Endothelial cell of umbilical vein (primary cell): ENCODE measurements at regions of chr6 and their contacts with region 1.

Region 1: DNA sequence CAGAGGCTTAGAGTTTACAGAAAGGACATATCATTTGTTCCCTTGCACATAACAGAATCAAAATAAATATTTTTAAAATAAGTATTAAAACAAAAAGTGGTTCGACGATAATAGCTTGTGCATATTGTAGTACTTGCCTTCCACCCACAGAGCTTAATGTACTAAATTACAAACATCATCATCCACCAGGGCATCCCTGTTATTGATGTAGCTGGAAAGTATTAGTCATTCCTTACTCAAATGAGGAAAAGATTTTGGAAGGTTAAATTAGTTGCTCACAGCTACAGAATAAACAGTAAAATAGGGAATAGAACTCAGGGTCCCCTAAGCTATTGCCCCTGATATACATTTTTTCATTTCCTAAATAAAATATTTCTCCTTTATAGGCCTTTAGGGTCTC is 150.3 kb downstream of the PTPRK start:
- DNase-seq: peak; percentile 71
- H3K4me3 ChIP-seq: no peak overlapping the region
- H3K27ac ChIP-seq: no peak overlapping the region
- H3K4me1 ChIP-seq: peaks cover 42% of the 10 kb centered on the region
- H3K27me3 ChIP-seq: no peaks in the 10 kb centered on the region
- CTCF ChIP-seq: no peak
- POLR2A ChIP-seq: no peak

Region 2: DNA sequence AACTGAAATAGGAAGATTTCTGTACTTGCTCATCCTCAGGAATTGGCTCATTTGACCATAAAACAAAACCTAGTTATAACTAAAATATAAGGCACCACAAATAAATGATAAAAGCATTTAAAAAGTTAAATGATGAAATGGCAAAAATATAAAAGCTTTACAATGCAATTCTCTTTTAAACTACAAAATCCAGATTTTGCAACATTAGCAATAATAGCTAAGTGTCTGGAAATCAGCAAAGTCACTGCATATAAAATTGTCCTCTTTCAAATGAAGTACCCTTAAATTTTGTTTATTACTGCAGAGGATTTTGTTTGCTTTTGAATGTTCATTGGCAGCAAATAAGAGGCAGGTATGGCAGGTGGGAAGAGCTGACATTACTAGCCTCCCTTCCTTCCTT is 1522.0 kb before region 1 on chr6:
- CTCF ChIA-PET with region 1: no interaction called
- POLR2A ChIA-PET with region 1: no interaction called
- dilution Hi-C with region 1: no loop called
- intact Hi-C with region 1: no loop called
- DNase-seq: no peak
- H3K4me3 ChIP-seq: no peak overlapping the region
- H3K27ac ChIP-seq: no peak overlapping the region
- H3K4me1 ChIP-seq: peaks cover 4% of the 10 kb centered on the region
- H3K27me3 ChIP-seq: no peaks in the 10 kb centered on the region
- CTCF ChIP-seq: no peak
- POLR2A ChIP-seq: no peak

Region 3: GRCh38 chr6:128131566-128131965 is 238.5 kb before region 1 on chr6:
- CTCF ChIA-PET with region 1: no interaction called
- POLR2A ChIA-PET with region 1: no interaction called
- dilution Hi-C with region 1: no loop called
- intact Hi-C with region 1: no loop called
- DNase-seq: peak; percentile 72
- H3K4me3 ChIP-seq: no peak overlapping the region
- H3K27ac ChIP-seq: no peak overlapping the region
- H3K4me1 ChIP-seq: peaks cover 8% of the 10 kb centered on the region
- H3K27me3 ChIP-seq: no peaks in the 10 kb centered on the region
- CTCF ChIP-seq: no peak
- POLR2A ChIP-seq: no peak

Region 4: GRCh38 chr6:128389820-128390534 is 19.9 kb after region 1 on chr6:
- CTCF ChIA-PET with region 1: interaction called, 15 read pairs
- POLR2A ChIA-PET with region 1: no interaction called
- dilution Hi-C with region 1: no loop called
- intact Hi-C with region 1: no loop called
- DNase-seq: no peak
- H3K4me3 ChIP-seq: no peak overlapping the region
- H3K27ac ChIP-seq: no peak overlapping the region
- H3K4me1 ChIP-seq: no peaks in the 10 kb centered on the region
- H3K27me3 ChIP-seq: no peaks in the 10 kb centered on the region
- CTCF ChIP-seq: no peak
- POLR2A ChIP-seq: no peak